Activated CD4-positive, alpha-beta memory T cell treated with anti-CD3 and anti-CD28 coated beads, Interleukin-2, amount 10 ng/mL, durations not matched to agents 7 days and 5 days (primary cell): ENCODE measurements at regions of chr13 and their contacts with region 1.

Region 1: GRCh38 chr13:30865123-30866049 is 40.7 kb upstream of the MEDAG start:
- DNase-seq: peak; percentile 71
- H3K4me3 Mint-ChIP-seq: no peak overlapping the region
- H3K27ac Mint-ChIP-seq: no peak overlapping the region
- H3K4me1 Mint-ChIP-seq: peaks cover 5% of the 10 kb centered on the region
- H3K27me3 Mint-ChIP-seq: peaks cover 20% of the 10 kb centered on the region

Region 2: GRCh38 chr13:30808589-30808988 is 56.8 kb before region 1 on chr13:
- CTCF ChIA-PET with region 1: interaction called, 11 read pairs
- POLR2A ChIA-PET with region 1: no interaction called
- DNase-seq: no peak
- H3K4me3 Mint-ChIP-seq: no peak overlapping the region
- H3K27ac Mint-ChIP-seq: no peak overlapping the region
- H3K4me1 Mint-ChIP-seq: peaks cover 2% of the 10 kb centered on the region
- H3K27me3 Mint-ChIP-seq: peaks cover 3% of the 10 kb centered on the region

Region 3: DNA sequence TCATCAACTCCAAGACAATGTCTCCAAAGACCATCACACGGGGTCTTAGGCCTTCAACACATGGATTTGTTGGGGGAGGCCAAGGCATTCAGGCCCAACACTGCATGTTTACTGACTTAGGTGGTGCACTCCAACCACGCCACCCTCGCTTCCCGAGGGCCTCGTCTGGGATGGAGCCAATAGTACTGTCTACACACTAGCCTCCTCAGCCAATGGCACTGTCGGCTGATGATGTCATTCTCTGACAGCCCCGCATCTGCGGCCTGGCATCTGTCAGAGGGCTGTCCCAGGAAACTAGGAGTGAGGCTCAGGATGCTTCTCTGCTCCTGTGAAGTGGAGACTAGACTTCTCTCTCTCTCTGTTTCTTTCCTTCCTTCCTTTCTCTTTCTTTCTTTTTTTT is 163.7 kb after region 1 on chr13:
- CTCF ChIA-PET with region 1: no interaction called
- POLR2A ChIA-PET with region 1: no interaction called
- DNase-seq: no peak
- H3K4me3 Mint-ChIP-seq: no peak overlapping the region
- H3K27ac Mint-ChIP-seq: no peak overlapping the region
- H3K4me1 Mint-ChIP-seq: no peaks in the 10 kb centered on the region
- H3K27me3 Mint-ChIP-seq: peaks cover 44% of the 10 kb centered on the region